ENCODE measurements at regions of chrX and their contacts with region 1.

Region 1: GRCh38 chrX:49840679-49841078 is 11.6 kb downstream of the PAGE4 start:
- DNase-seq: peak; percentile 15
- ATAC-seq: peak; percentile 84
- H3K4me3 ChIP-seq: no peak overlapping the region
- H3K27ac ChIP-seq: no peak overlapping the region
- H3K4me1 ChIP-seq: no peaks in the 10 kb centered on the region
- H3K27me3 ChIP-seq: no peaks in the 10 kb centered on the region
- CTCF ChIP-seq: peak; percentile 41 to 66 (median 57); a peak in 4 of 6 replicates
- EP300 ChIP-seq: no peak
- POLR2A ChIP-seq: no peak
- RAD21 ChIP-seq: peak; percentile 45

Region 2: GRCh38 chrX:49291615-49292337 is 548.9 kb before region 1 on chrX:
- CTCF ChIA-PET with region 1: interaction called, 4 read pairs
- POLR2A ChIA-PET with region 1: no interaction called
- RAD21 ChIA-PET with region 1: interaction called, 5 read pairs
- SMC1A ChIA-PET with region 1: no interaction called
- in situ Hi-C with region 1: no loop called
- intact Hi-C with region 1: loop called (anchors 1 kb)
- DNase-seq: no peak
- ATAC-seq: peak; percentile 94
- H3K4me3 ChIP-seq: no peak overlapping the region
- H3K27ac ChIP-seq: no peak overlapping the region
- H3K4me1 ChIP-seq: no peaks in the 10 kb centered on the region
- H3K27me3 ChIP-seq: no peaks in the 10 kb centered on the region
- CTCF ChIP-seq: peak; percentile 51 to 75 (median 70)
- EP300 ChIP-seq: no peak
- POLR2A ChIP-seq: no peak
- RAD21 ChIP-seq: peak; percentile 53

Region 3: DNA sequence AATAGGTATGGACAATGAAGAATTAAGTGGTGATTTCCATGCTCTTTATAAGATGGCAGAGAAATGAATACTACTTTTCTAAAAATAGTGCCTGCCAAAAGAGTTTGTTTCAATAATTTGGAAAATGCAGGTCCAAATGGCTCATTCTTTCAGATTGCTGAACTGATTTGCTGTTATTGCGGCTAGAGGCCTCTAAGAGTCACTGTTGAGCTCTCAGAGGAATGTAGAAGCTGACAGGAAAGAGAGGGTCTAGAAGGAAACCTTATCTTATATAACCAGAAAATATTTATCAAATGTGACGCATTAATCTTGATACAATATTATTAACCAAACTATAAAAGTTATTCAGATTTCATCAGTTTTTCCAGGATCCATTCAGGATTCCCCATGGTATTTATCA is 79.2 kb before region 1 on chrX:
- CTCF ChIA-PET with region 1: interaction called, 20 read pairs
- POLR2A ChIA-PET with region 1: no interaction called
- RAD21 ChIA-PET with region 1: interaction called, 4 read pairs
- SMC1A ChIA-PET with region 1: interaction called, 7 read pairs
- in situ Hi-C with region 1: no loop called
- intact Hi-C with region 1: loop called (anchors 5 kb)
- DNase-seq: no peak
- ATAC-seq: peak; percentile 50; the same call in 1 of the 3 replicates
- H3K4me3 ChIP-seq: no peak overlapping the region
- H3K27ac ChIP-seq: no peak overlapping the region
- H3K4me1 ChIP-seq: no peaks in the 10 kb centered on the region
- H3K27me3 ChIP-seq: no peaks in the 10 kb centered on the region
- CTCF ChIP-seq: peak; percentile 51 to 61 (median 61)
- EP300 ChIP-seq: no peak
- POLR2A ChIP-seq: no peak
- RAD21 ChIP-seq: peak; percentile 64

Region 4: DNA sequence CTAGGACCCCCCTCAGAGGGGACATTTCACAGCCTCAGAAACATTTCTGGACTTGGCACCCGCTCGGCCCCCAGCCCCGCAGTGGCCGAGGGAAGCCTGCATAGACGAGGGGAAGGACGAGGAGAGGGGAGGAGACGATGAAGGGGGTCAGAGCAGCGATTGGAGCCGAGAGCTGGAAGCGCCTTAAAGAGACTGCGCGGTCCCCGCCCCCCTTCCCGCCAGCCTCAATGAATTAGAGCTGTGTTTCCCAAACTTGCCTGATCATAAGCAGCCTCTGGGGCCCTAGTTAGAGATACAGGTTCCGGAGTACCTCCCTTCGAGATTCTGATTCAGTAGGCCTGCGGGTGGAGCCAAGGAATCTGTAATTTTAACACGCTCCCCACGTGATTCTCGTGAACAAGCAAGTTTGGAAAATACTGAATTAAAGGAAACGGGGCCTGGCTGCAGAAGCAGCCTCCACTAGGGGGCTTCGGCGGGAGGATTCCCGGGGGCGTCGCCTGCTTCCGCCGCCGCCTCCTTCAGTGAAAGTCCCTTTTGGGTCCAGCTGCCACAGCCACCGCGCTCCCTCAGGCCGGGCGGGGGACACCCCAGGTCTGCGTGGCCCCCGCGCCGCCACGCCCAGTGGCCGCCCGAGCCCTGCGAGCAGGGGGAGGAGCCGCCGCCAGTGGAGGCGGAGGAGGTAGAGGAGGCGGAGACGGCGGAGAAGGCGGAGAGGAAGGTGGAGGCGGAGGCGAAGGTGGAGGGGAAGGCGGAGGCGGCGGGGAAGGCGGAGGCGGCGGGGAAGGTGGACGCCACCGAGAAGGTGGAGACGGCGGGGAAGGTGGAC is 38.4 kb after region 1 on chrX and contains the start of gene USP27X:
- CTCF ChIA-PET with region 1: interaction called, 85 read pairs
- POLR2A ChIA-PET with region 1: no interaction called
- RAD21 ChIA-PET with region 1: interaction called, 46 read pairs
- SMC1A ChIA-PET with region 1: interaction called, 35 read pairs
- in situ Hi-C with region 1: no loop called
- intact Hi-C with region 1: loop called (anchors 1 kb)
- DNase-seq: peak; percentile 27
- ATAC-seq: peak; percentile 96
- H3K4me3 ChIP-seq: peak within 1 kb of the TSS; percentile 55; the same call in 1 of the 2 replicates
- H3K27ac ChIP-seq: no peak within 1 kb of the TSS; the same call in 1 of the 2 replicates
- H3K4me1 ChIP-seq: no peaks in the 10 kb centered on the region; the same call in 1 of the 2 replicates
- H3K27me3 ChIP-seq: no peaks in the 10 kb centered on the region
- CTCF ChIP-seq: peak; percentile 34 to 43 (median 39); a peak in 4 of 6 replicates
- EP300 ChIP-seq: no peak
- POLR2A ChIP-seq: peak; percentile 58; the same call in 1 of the 2 replicates
- RAD21 ChIP-seq: no peak
- polyA plus RNA-seq, gene USP27X: 0.31 to 0.33 TPM

Region 5: GRCh38 chrX:49884290-49884862 is 43.7 kb after region 1 on chrX:
- CTCF ChIA-PET with region 1: interaction called, 85 read pairs
- POLR2A ChIA-PET with region 1: interaction called, 3 read pairs
- RAD21 ChIA-PET with region 1: interaction called, 46 read pairs
- SMC1A ChIA-PET with region 1: interaction called, 5 read pairs
- in situ Hi-C with region 1: no loop called
- intact Hi-C with region 1: no loop called
- DNase-seq: peak; percentile 7
- ATAC-seq: peak; percentile 80
- H3K4me3 ChIP-seq: no peak overlapping the region
- H3K27ac ChIP-seq: no peak overlapping the region
- H3K4me1 ChIP-seq: no peaks in the 10 kb centered on the region; the same call in 1 of the 2 replicates
- H3K27me3 ChIP-seq: no peaks in the 10 kb centered on the region
- CTCF ChIP-seq: peak; percentile 76 to 88 (median 83)
- EP300 ChIP-seq: no peak
- POLR2A ChIP-seq: no peak
- RAD21 ChIP-seq: peak; percentile 45; the same call in 1 of the 2 replicates

Region 6: DNA sequence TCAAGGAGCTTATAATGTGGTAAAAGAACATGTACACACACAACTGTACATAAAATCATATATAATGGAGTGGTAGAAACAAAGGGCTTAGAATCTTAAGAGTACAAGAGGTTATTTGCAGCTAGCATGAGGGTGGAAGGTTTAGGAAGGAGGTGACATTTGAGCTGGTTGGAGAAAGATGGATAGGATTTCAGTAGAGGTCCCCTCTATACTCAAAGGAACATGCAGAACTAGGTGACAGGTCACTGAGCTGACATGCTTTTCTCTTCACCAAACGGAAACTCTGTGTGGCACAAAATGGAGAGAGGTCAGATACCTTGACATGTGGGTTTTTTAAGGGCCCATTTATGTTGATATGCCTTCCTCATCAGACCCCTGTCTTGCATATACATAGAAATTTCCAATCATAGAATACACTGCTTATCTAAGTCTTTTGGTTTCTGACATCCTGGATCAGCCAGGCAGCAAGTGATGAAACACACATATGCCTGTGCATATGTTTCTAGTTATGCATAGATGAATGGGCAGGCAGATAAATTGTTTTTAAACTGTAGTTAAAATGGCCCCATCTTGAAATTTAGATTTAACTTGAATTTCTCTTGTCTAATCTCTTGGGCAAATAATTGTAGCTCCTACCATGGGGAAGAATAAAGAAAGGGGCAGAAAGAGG is 111.0 kb after region 1 on chrX:
- CTCF ChIA-PET with region 1: no interaction called
- POLR2A ChIA-PET with region 1: no interaction called
- RAD21 ChIA-PET with region 1: no interaction called
- SMC1A ChIA-PET with region 1: no interaction called
- in situ Hi-C with region 1: no loop called
- intact Hi-C with region 1: no loop called
- DNase-seq: no peak
- ATAC-seq: no peak
- H3K4me3 ChIP-seq: no peak overlapping the region
- H3K27ac ChIP-seq: no peak overlapping the region
- H3K4me1 ChIP-seq: no peaks in the 10 kb centered on the region; the same call in 1 of the 2 replicates
- H3K27me3 ChIP-seq: no peaks in the 10 kb centered on the region
- CTCF ChIP-seq: no peak
- EP300 ChIP-seq: no peak
- POLR2A ChIP-seq: no peak
- RAD21 ChIP-seq: no peak